Cardiac septum (tissue), 1 donor: ENCODE measurements at regions of chr3 and their contacts with region 1.

Region 1: GRCh38 chr3:126703512-126704462 is at the start of gene CHCHD6:
- DNase-seq: peak; percentile 98
- total RNA-seq, gene CHCHD6: 12.1 TPM

Region 2: DNA sequence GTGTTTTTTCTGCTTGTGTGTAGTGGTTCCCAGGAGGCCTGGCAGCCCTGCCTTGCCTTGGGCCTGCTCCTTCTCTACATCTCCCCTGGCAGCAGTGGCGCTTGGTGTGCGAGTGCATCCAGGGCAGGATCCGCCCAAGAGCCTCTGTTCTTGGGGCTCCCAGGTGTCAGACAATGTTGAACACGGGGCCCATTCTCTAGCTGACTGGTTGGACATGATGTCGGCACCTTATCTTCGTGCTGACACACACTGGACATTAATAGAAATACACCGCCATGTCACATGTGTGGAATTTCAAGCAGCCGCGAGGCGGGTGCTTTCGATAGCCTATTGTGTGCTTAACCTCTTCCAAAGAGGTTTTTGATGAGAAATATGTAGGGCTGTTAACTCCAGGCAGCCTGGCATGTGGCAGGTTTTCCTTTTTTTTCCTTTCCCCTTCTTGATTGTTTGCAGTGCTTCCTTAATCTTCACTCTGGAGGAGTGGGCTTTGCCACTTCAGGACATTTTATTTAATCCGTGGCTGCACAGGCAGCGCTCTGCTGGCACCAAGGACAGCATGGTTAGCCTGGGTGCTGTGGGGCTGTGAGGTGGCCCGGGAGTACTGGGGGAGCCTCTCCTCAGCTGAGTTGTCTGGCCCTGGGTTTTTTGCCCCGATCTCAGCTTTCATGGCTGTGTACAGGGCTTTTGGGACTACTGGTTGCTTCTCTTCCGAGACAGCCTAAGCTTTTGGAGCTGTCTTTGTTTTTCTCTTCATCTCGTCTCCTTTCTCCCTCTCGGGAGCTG is 42.8 kb after region 1 on chr3:
- intact Hi-C with region 1: loop called (anchors 2 kb)
- DNase-seq: peak; percentile 84

Region 3: DNA sequence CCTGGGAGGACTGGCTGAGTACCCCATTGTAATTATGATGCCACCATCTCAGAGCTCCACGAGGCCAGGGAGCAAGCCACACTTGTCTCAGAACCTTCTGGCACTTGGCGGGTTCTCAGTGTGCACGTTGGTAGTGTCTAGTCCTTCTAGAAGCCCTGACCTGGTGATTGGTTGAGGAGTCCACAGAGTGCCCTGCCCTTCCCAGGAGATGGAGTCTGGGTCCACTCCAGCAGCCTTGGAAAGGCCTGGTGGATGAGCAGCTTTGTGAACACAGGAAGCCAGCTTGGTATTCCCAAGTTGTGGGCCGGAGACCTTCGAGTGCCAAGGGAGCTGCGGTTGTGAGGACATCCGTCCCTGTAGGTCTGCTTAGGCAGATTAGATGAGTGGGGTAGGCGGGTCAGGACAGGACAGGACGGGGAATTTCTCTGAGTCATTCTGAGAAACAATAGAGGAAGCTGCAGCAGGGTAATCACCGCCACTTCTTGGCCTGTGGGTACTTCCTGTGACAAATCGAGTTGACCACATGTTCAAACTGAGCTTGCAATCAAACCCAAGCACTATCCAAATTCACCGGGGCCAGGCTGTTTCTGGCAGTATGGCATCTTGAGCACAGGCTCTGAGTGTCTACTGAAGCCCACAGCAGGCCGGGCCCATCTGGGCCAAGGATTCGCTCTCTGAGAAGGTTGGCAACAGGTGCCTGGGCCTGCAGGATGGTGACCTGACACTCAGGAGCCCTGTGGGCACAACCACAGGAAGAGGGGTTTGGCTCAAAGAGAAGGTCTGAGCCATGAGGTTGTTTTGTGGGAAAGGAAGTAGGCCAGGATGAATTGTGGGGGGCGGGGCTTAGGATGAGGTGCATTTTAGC is 207.6 kb after region 1 on chr3:
- intact Hi-C with region 1: no loop called
- DNase-seq: no peak